PC-9 (cell line): ENCODE measurements at regions of chr2 and their contacts with region 1.

Region 1: DNA sequence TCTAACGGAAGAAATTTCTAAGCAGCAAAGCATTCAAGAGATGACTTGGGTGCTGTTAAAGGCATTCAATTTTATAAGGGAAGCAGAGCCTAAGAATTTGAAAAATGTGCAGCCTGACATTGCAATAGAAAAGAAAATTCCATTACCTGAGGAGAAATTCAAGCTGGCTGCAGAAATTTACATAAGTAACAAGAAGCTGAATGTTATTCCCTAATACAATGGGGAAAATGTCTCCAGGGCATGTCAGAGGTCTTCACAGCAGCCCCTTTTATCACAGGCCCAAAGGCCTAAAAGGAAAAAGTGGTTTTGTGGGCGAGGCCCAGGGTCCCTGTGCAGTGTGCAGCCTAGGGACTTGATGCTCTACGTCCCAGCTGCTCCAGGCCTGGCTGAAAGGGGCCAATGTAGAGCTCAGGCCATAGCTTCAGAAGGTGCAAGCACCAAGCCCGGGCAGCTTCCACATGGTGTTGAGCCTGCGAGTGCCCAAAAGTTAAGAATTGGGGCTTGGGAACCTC is 306.7 kb downstream of the RDH14 start:
- DNase-seq: no peak
- H3K4me3 ChIP-seq: no peak overlapping the region
- H3K27ac ChIP-seq: no peak overlapping the region
- H3K4me1 ChIP-seq: no peaks in the 10 kb centered on the region
- H3K27me3 ChIP-seq: no peaks in the 10 kb centered on the region
- CTCF ChIP-seq: no peak

Region 2: DNA sequence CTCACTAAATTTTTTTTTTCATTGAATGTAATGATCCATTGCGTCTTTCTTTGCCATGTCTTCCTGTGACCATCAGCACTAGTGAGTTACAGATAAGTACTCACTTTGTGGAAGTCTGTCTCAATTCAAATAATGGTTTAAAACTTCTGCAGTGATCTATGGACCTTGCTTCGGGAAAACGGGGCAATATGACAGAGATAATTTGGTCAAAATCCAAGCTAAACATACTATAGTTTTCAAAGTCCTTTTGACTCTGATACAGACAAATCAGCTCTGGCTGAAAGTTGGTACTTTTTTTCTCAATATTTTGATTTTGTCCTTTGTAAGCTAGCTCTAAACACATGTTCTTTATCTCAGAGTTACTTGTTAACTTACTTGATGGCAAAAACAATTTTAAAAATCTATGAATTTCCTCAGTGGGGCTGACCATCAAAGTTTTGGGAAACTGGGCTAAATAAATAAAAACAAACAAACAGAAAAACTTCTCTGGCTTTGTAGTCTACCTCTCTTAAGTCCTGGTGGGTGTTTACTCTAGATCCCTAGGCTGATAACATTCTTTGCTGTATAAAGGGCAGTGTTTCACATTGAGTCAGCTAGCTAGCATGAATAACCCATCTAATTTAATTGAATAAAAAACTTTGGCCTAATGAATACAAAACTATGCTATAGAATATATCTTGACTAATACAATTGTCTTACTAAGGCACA is 20.9 kb before region 1 on chr2:
- CTCF ChIA-PET with region 1: no interaction called
- POLR2A ChIA-PET with region 1: interaction called, 18 read pairs
- intact Hi-C with region 1: no loop called
- DNase-seq: peak in 1 of 2 experiments; percentile 89
- H3K4me3 ChIP-seq: no peak overlapping the region; the same call in 1 of the 2 replicates
- H3K27ac ChIP-seq: peak overlapping the region; percentile 46
- H3K4me1 ChIP-seq: peaks cover 29% of the 10 kb centered on the region
- H3K27me3 ChIP-seq: no peaks in the 10 kb centered on the region
- CTCF ChIP-seq: no peak